SK-N-SH (cell line): ENCODE measurements at regions of chr10 and their contacts with region 1.

Region 1: DNA sequence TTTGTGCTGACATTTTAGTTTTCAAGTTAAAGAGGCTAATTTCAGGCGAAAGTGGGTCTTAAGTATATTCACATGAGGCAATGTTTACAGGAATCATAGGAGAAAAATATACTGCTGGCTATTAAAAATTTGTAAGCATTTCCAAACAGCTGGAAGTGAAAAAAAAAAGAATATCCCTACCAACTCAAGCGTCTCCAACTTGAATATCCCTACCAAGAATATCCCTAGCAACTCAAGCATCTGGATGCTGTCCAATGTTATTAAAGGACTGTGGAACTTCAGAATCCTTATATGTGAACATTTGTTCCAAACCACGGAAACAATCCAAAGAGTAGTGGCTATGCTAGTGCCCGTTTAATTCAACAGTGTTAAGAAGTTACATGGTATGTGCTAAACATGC is 1303.0 kb downstream of the GATA3 start:
- DNase-seq: no peak
- H3K4me3 ChIP-seq: no peak overlapping the region
- H3K27ac ChIP-seq: no peak overlapping the region
- H3K4me1 ChIP-seq: no peaks in the 10 kb centered on the region
- H3K27me3 ChIP-seq: no peaks in the 10 kb centered on the region
- CTCF ChIP-seq: no peak
- EP300 ChIP-seq: no peak
- RAD21 ChIP-seq: no peak

Region 2: GRCh38 chr10:9294865-9295264 is 62.6 kb before region 1 on chr10:
- CTCF ChIA-PET with region 1: no interaction called
- POLR2A ChIA-PET with region 1: no interaction called
- DNase-seq: no peak
- H3K4me3 ChIP-seq: no peak overlapping the region
- H3K27ac ChIP-seq: peak overlapping the region in 1 of 2 experiments; percentile 100; a peak in 2 of 4 replicates
- H3K4me1 ChIP-seq: peaks cover 0 to 28% of the 10 kb centered on the region in 2 experiments; a peak in 2 of 4 replicates
- H3K27me3 ChIP-seq: no peaks in the 10 kb centered on the region
- CTCF ChIP-seq: no peak
- EP300 ChIP-seq: peak in 1 of 2 experiments; percentile 66; a peak in 1 of 4 replicates
- RAD21 ChIP-seq: peak; percentile 4; the same call in 1 of the 2 replicates

Region 3: DNA sequence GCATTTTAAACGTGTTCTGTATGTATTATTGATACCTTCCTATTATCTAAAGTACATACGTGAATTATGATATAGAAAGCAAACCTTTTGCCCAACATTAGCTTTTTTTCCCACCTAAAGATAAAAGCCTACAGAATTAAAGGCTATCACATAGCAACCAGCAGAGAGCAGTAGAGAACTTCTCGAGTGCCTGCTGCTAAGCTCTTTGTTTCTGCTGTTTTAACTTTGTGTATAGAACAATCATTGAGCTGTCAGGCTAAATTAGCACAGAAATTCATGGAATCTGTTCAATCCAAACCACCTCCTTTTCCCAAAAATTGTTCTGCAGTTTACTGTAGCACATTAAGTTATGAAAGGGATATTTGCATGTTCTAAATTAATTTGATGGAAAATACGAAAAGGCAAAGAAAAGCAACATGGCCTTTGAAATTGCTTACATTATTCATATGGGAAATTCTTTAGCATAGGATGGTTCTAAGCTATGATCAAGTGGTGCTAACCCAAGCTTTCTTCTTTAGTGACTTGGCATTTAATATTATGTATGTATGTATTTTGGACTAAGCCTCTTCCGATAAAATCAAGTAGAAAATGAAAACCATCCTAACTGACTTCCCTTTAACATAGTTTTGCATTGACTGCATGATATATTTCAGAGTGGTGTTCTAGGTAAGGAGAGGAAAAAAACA is 14.4 kb before region 1 on chr10:
- CTCF ChIA-PET with region 1: interaction called, 12 read pairs
- POLR2A ChIA-PET with region 1: no interaction called
- DNase-seq: peak; percentile 31
- H3K4me3 ChIP-seq: no peak overlapping the region; a peak in 1 of 4 replicates
- H3K27ac ChIP-seq: no peak overlapping the region
- H3K4me1 ChIP-seq: no peaks in the 10 kb centered on the region
- H3K27me3 ChIP-seq: no peaks in the 10 kb centered on the region
- CTCF ChIP-seq: peak; percentile 76
- EP300 ChIP-seq: no peak
- RAD21 ChIP-seq: peak; percentile 79